CD4-positive, alpha-beta memory T cell (primary cell): ENCODE measurements at regions of chr5 and their contacts with region 1.

Region 1: GRCh38 chr5:175534070-175534932 is 55.9 kb downstream of the SFXN1 start:
- DNase-seq: peak; percentile 77 to 82 (median 81)
- H3K4me3 ChIP-seq: peak overlapping the region in 1 of 2 donors; percentile 14
- H3K4me3 Mint-ChIP-seq: peak overlapping the region; percentile 65 to 77 (median 69)
- H3K27ac ChIP-seq: no peak overlapping the region
- H3K27ac Mint-ChIP-seq: peak overlapping the region in 6 of 7 donors; percentile 9 to 85 (median 46)
- H3K4me1 ChIP-seq: peaks cover 14% of the 10 kb centered on the region
- H3K4me1 Mint-ChIP-seq: peaks cover 9 to 24% (median 19%) of the 10 kb centered on the region in 4 donors
- H3K27me3 ChIP-seq: no peaks in the 10 kb centered on the region
- H3K27me3 Mint-ChIP-seq: no peaks in the 10 kb centered on the region

Region 2: GRCh38 chr5:175508896-175509295 is 25.4 kb before region 1 on chr5:
- CTCF ChIA-PET with region 1: interaction called, 22 read pairs
- POLR2A ChIA-PET with region 1: no interaction called
- intact Hi-C with region 1: no loop called
- DNase-seq: no peak
- H3K4me3 ChIP-seq: no peak overlapping the region
- H3K4me3 Mint-ChIP-seq: no peak overlapping the region
- H3K27ac ChIP-seq: no peak overlapping the region
- H3K27ac Mint-ChIP-seq: peak overlapping the region in 2 of 7 donors; percentile 30 to 37
- H3K4me1 ChIP-seq: peaks cover 18% of the 10 kb centered on the region
- H3K4me1 Mint-ChIP-seq: peaks cover 10 to 41% (median 28%) of the 10 kb centered on the region in 4 donors
- H3K27me3 ChIP-seq: no peaks in the 10 kb centered on the region
- H3K27me3 Mint-ChIP-seq: no peaks in the 10 kb centered on the region

Region 3: GRCh38 chr5:175567954-175568353 is 33.7 kb after region 1 on chr5:
- CTCF ChIA-PET with region 1: interaction called, 15 read pairs
- POLR2A ChIA-PET with region 1: interaction called, 3 read pairs
- intact Hi-C with region 1: loop called (anchors 5 kb)
- DNase-seq: peak in 1 of 5 donors; percentile 2
- H3K4me3 ChIP-seq: no peak overlapping the region
- H3K4me3 Mint-ChIP-seq: no peak overlapping the region
- H3K27ac ChIP-seq: no peak overlapping the region
- H3K27ac Mint-ChIP-seq: peak overlapping the region in 1 of 7 donors; percentile 54
- H3K4me1 ChIP-seq: no peaks in the 10 kb centered on the region
- H3K4me1 Mint-ChIP-seq: peaks cover 0 to 9% (median 3%) of the 10 kb centered on the region in 4 donors
- H3K27me3 ChIP-seq: no peaks in the 10 kb centered on the region
- H3K27me3 Mint-ChIP-seq: peaks cover 4 to 5% of the 10 kb centered on the region in 2 donors

Region 4: GRCh38 chr5:175689147-175689991 is 155.1 kb after region 1 on chr5:
- CTCF ChIA-PET with region 1: interaction called, 40 read pairs
- POLR2A ChIA-PET with region 1: no interaction called
- intact Hi-C with region 1: no loop called
- DNase-seq: no peak
- H3K4me3 ChIP-seq: no peak overlapping the region
- H3K4me3 Mint-ChIP-seq: no peak overlapping the region
- H3K27ac ChIP-seq: no peak overlapping the region
- H3K27ac Mint-ChIP-seq: peak overlapping the region in 4 of 7 donors; percentile 9 to 74 (median 54)
- H3K4me1 ChIP-seq: no peaks in the 10 kb centered on the region
- H3K4me1 Mint-ChIP-seq: peaks cover 7 to 29% (median 14%) of the 10 kb centered on the region in 4 donors
- H3K27me3 ChIP-seq: no peaks in the 10 kb centered on the region
- H3K27me3 Mint-ChIP-seq: no peaks in the 10 kb centered on the region

Region 5: GRCh38 chr5:175718401-175719108 is 184.3 kb after region 1 on chr5:
- CTCF ChIA-PET with region 1: interaction called, 100 read pairs
- POLR2A ChIA-PET with region 1: no interaction called
- intact Hi-C with region 1: loop called (anchors 2 kb)
- DNase-seq: peak; percentile 33 to 47 (median 42)
- H3K4me3 ChIP-seq: no peak overlapping the region
- H3K4me3 Mint-ChIP-seq: no peak overlapping the region
- H3K27ac ChIP-seq: no peak overlapping the region
- H3K27ac Mint-ChIP-seq: no peak overlapping the region
- H3K4me1 ChIP-seq: no peaks in the 10 kb centered on the region
- H3K4me1 Mint-ChIP-seq: peaks cover 0 to 1% (median 0%) of the 10 kb centered on the region in 4 donors
- H3K27me3 ChIP-seq: no peaks in the 10 kb centered on the region
- H3K27me3 Mint-ChIP-seq: peaks cover 0 to 2% of the 10 kb centered on the region in 2 donors